Activated naive CD4-positive, alpha-beta T cell treated with anti-CD3 and anti-CD28 coated beads for 36 hours (primary cell): ENCODE measurements at regions of chr21 and their contacts with region 1.

Region 1: DNA sequence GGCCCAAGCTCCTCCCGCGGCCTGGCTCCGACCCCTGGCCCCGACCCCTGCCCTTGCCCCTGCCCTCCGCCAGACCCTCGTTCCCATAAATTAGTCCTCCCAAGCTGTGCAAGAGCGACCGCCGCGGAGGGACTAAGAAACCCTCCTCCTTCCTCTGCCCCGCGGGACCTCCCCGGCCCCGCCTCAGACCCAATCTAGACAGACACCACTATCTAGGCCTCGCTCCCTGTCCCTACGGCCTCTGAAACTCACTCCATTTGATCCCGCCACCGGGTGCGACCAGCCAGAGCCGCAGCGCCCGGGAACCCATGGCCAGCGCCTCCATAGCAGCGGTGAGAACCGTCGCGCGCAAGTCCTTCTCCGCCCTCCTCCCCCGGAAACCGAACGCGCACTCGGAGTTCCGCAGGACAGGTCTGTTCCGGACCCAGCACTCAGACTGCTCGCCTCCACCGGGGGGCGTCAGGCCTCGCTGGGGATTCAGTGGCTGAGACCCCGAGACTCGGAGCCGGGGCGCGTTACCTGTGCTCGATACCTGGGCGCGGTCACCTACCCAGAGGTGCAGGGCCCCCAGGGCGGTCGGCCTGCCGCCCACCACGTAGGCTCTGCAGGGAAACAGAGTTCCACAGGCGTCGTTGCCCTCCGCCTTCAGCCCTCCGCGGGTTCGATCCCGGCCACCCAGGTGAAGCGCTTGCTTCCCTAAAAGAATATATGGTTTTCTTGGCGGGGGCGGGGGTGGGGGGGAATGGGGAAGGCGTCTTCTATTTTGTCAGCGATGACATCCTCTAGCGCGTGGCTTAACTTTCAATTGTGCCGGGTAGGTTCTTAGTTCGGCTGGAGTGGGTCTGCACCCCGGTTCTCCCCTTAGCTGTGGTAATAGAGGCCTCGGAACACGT is at the start of gene MRPL39:
- DNase-seq: peak; percentile 93
- H3K4me3 Mint-ChIP-seq: peak within 1 kb of the TSS; percentile 94
- H3K27ac Mint-ChIP-seq: peak within 1 kb of the TSS; percentile 95
- H3K4me1 Mint-ChIP-seq: peaks cover 35% of the 10 kb centered on the region
- H3K27me3 Mint-ChIP-seq: no peaks in the 10 kb centered on the region
- total RNA-seq, gene MRPL39: 71.4 to 75.8 TPM

Region 2: GRCh38 chr21:25396135-25396711 is 211.2 kb before region 1 on chr21:
- CTCF ChIA-PET with region 1: no interaction called
- intact Hi-C with region 1: loop called (anchors 1 kb)
- DNase-seq: peak; percentile 89
- H3K4me3 Mint-ChIP-seq: peak overlapping the region; percentile 41
- H3K27ac Mint-ChIP-seq: peak overlapping the region; percentile 81
- H3K4me1 Mint-ChIP-seq: peaks cover 18% of the 10 kb centered on the region
- H3K27me3 Mint-ChIP-seq: peaks cover 2% of the 10 kb centered on the region

Region 3: DNA sequence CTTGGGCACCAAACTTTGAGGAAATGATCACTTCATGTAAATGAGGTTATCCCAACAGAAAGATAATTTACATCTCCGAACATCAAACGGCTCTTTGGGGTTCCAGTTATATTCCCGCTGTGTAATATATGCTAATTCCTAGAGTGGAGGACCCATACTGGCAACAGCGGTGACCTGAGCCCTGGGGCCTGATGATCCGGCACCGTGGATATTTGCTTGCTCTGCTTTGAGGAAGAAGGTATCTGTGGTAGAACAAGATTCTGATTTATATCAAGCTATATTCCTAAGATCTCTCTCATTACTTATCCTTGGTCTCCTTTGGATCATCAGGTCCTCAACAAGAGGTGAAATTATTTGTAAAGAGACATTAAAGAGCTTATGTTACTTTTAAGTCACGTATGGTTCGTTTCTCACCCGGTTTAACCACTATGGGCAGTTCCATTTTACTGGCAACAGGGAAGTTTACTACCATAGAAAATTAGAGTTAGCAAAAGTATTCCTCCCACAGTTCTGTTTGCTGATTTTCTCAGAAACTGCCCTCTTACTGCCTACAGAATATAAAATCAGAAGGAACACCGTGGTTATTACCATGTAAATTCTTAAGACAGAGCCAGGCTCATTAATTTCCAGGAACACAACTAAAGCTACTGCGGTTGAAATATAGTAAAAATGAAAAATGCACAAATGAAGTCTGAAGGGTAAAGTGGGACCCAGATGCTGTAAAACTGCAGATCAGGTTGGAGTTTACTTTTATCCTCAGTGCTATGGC is 56.9 kb before region 1 on chr21:
- CTCF ChIA-PET with region 1: no interaction called
- intact Hi-C with region 1: no loop called
- DNase-seq: no peak
- H3K4me3 Mint-ChIP-seq: no peak overlapping the region
- H3K27ac Mint-ChIP-seq: no peak overlapping the region
- H3K4me1 Mint-ChIP-seq: peaks cover 12% of the 10 kb centered on the region
- H3K27me3 Mint-ChIP-seq: no peaks in the 10 kb centered on the region

Region 4: GRCh38 chr21:25573409-25574206 is 33.8 kb before region 1 on chr21:
- CTCF ChIA-PET with region 1: interaction called, 3 read pairs
- intact Hi-C with region 1: loop called (anchors 1 kb)
- DNase-seq: peak; percentile 82
- H3K4me3 Mint-ChIP-seq: peak overlapping the region; percentile 72
- H3K27ac Mint-ChIP-seq: peak overlapping the region; percentile 95
- H3K4me1 Mint-ChIP-seq: peaks cover 73% of the 10 kb centered on the region
- H3K27me3 Mint-ChIP-seq: no peaks in the 10 kb centered on the region

Region 5: GRCh38 chr21:25708467-25709065 is 101.2 kb after region 1 on chr21:
- CTCF ChIA-PET with region 1: interaction called, 62 read pairs
- intact Hi-C with region 1: loop called (anchors 1 kb)
- DNase-seq: peak; percentile 60
- H3K4me3 Mint-ChIP-seq: no peak overlapping the region
- H3K27ac Mint-ChIP-seq: no peak overlapping the region
- H3K4me1 Mint-ChIP-seq: no peaks in the 10 kb centered on the region
- H3K27me3 Mint-ChIP-seq: no peaks in the 10 kb centered on the region

Region 6: DNA sequence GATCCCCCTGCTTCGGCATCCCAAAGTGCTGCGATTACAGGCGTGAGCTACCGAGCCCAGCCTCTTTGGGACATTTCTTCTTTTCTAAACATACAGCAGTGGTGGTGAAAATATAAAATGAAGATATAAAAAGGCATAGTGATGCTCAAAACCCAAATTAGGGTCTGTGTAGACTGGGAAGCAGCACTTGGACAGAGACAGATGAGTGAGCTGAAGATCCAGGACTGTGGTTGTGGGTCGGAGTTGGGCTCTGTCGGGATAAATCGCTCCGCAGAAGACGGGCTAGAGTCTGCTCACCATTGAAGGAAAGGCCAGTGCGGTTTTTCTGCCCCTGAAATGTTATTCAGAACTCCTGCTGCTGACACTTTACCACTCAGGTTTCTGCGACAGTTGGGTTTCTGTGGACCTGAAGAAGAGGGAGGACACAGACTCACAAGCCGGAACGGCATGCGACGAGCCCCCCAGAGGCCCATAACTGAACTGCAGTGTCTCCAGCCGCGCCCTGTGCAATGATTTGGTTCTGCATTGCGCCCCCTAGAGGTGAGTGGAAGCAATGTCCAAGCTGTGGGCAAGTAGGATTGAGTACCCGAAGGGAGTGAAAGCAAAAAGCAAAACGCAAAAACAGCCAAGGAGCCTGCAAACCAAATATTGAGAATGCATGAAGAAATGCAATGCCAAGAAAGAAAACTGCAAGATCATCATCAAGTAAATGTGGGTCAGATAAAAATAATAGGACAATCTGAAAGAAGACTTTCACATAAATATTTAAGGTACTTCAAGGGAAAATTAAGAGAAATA is 194.0 kb after region 1 on chr21:
- CTCF ChIA-PET with region 1: interaction called, 22 read pairs
- intact Hi-C with region 1: loop called (anchors 1 kb)
- DNase-seq: peak; percentile 95
- H3K4me3 Mint-ChIP-seq: peak overlapping the region; percentile 23
- H3K27ac Mint-ChIP-seq: no peak overlapping the region
- H3K4me1 Mint-ChIP-seq: peaks cover 6% of the 10 kb centered on the region
- H3K27me3 Mint-ChIP-seq: peaks cover 8% of the 10 kb centered on the region

Region 7: GRCh38 chr21:25837533-25838265 is 230.3 kb after region 1 on chr21:
- CTCF ChIA-PET with region 1: no interaction called
- intact Hi-C with region 1: no loop called
- DNase-seq: no peak
- H3K4me3 Mint-ChIP-seq: no peak overlapping the region
- H3K27ac Mint-ChIP-seq: no peak overlapping the region
- H3K4me1 Mint-ChIP-seq: no peaks in the 10 kb centered on the region
- H3K27me3 Mint-ChIP-seq: no peaks in the 10 kb centered on the region

Region 8: GRCh38 chr21:25881525-25882376 is 274.4 kb after region 1 on chr21:
- CTCF ChIA-PET with region 1: interaction called, 4 read pairs
- intact Hi-C with region 1: loop called (anchors 5 kb)
- DNase-seq: peak; percentile 74
- H3K4me3 Mint-ChIP-seq: no peak overlapping the region
- H3K27ac Mint-ChIP-seq: no peak overlapping the region
- H3K4me1 Mint-ChIP-seq: no peaks in the 10 kb centered on the region
- H3K27me3 Mint-ChIP-seq: no peaks in the 10 kb centered on the region

Region 9: DNA sequence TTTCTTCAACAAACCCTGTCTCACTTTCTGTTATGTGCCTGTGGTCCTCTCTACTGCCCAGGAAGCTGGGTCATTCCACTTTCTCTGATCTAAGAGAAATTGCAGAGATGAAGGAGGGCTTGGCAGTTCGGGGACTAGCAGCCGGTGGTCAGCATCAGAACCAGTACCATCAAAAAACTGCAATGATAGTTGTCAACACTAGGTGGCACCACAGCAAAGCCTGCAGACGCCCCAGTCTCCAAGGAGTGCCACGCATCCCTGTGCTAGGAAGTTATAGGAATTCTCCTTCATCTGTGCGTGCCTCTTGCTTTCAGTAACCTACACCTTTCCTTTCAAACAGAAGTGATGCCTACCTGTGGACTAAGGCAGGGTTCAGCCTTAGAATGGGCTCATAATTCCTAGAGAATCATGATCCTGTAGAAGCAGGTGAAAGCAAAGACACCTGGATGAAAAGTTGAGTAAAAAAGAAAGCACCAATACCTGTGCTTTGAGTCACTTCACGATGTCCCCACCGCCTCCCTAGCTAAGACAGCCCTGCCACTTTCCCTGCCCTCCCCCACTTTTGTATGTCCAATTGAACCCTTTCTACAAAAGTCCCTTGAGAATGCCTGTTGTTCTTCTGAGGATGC is 1108.6 kb after region 1 on chr21:
- CTCF ChIA-PET with region 1: interaction called, 4 read pairs
- intact Hi-C with region 1: loop called (anchors 1 kb)
- DNase-seq: peak; percentile 30
- H3K4me3 Mint-ChIP-seq: no peak overlapping the region
- H3K27ac Mint-ChIP-seq: no peak overlapping the region
- H3K4me1 Mint-ChIP-seq: no peaks in the 10 kb centered on the region
- H3K27me3 Mint-ChIP-seq: peaks cover 10% of the 10 kb centered on the region